Activated T-helper 2 cell treated with anti-CD3 and anti-CD28 coated beads, Interferon-gamma antibody, Interleukin-2, Interleukin-4, amounts not matched to agents 10 μg/mL and 5 μg/mL and 100 μg/mL, durations not matched to agents 14 hours and 24 hours and 36 hours (primary cell): ENCODE measurements at regions of chr1 and their contacts with region 1.

Region 1: DNA sequence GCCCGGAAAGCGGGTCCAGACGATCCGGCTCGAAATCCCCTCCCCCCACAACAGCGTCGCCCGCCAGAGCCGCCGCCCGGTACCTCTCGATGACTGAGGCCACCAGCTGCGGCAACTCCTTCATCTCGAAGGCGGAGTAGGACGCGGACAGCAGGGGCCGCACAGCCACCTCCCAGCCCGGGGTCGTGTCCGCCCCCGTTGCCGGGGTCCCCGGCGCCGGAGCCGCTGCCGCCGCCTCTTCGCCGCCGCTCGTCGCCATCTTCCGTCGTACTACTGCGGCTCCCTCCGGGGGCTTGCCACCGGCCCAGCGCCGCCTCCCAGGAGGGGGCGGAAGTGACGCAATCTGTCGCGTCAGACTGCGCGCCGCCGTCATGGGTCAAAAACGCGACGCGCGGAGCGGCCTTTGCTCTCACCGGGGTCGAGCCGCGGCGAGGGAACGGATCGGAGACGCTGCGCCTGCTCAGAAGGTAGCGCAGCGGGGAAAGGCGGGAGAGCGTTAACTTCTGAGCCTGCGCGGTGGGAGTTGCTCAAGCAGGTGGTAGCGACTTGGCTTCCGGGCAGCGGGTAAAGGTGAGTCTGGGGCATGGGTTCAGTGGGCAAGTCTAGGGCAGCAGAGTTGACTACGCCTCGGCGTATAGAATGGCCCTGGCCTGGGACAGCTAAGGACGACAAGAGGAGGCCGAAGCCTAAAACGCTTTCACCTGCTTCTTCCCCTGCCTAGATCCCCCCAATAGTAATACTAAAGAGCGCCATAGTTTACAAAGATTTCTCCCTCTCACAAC is at the start of gene UBR4:
- DNase-seq: peak; percentile 96
- H3K4me3 Mint-ChIP-seq: peak within 1 kb of the TSS; percentile 98
- H3K27ac Mint-ChIP-seq: peak within 1 kb of the TSS; percentile 94
- H3K4me1 Mint-ChIP-seq: peaks cover 54% of the 10 kb centered on the region
- H3K27me3 Mint-ChIP-seq: no peaks in the 10 kb centered on the region
- total RNA-seq, gene UBR4: 156 and 160 TPM in 2 replicates

Region 2: GRCh38 chr1:18949686-18950400 is 260.3 kb before region 1 on chr1:
- intact Hi-C with region 1: loop called (anchors 5 kb)
- DNase-seq: no peak
- H3K4me3 Mint-ChIP-seq: peak overlapping the region; percentile 73
- H3K27ac Mint-ChIP-seq: peak overlapping the region; percentile 96
- H3K4me1 Mint-ChIP-seq: peaks cover 92% of the 10 kb centered on the region
- H3K27me3 Mint-ChIP-seq: no peaks in the 10 kb centered on the region

Region 3: GRCh38 chr1:19179597-19180264 is 30.4 kb before region 1 on chr1:
- intact Hi-C with region 1: loop called (anchors 5 kb)
- DNase-seq: peak; percentile 31
- H3K4me3 Mint-ChIP-seq: no peak overlapping the region
- H3K27ac Mint-ChIP-seq: peak overlapping the region; percentile 81
- H3K4me1 Mint-ChIP-seq: peaks cover 25% of the 10 kb centered on the region
- H3K27me3 Mint-ChIP-seq: no peaks in the 10 kb centered on the region

Region 4: GRCh38 chr1:19186001-19186400 is 24.2 kb before region 1 on chr1:
- intact Hi-C with region 1: loop called (anchors 1 kb)
- DNase-seq: no peak
- H3K4me3 Mint-ChIP-seq: peak overlapping the region; percentile 60
- H3K27ac Mint-ChIP-seq: peak overlapping the region; percentile 94
- H3K4me1 Mint-ChIP-seq: peaks cover 28% of the 10 kb centered on the region
- H3K27me3 Mint-ChIP-seq: no peaks in the 10 kb centered on the region

Region 5: DNA sequence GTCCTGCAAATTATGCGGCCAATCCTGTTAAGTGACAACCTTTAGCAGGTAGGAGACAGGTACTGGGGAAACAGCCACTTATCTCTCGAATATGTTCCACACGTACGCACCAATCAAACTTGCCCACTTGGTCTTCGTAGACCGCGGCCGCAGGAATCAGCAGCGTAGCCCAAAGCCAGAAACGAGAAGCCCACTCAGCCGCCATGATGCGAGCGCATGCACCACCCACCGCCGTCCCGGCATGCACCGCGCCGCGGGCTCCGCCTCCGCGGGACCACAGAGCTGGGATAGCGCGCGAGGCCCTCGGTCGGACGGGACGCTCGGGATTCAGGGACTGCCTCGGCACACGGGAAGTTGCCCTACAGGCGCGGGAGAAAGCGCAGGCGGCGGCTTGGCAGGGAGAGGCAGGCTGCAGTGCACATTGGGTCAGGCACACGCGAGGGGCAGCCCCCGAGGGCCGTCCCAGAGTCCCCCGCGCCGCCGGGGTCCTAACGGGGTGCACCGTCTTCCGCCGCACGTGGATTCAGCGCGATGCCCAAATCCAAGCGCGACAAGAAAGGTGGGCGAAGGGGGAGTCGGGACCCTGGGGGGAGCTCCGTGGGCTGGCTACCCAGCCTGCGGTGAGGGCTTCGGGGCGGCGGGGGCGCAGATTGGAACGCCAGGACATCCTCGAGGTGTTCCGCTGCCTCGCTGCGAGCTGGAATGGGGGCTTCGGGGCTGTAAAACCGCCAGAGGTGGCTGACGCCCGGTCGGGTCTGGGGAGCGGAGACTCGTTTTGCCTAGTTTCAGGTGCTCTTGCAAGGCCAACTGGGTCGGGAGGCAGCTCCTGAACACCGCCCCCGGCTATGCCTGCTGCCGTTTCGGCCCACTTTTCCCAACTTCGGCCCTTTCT is 41.4 kb after region 1 on chr1 and contains the starts of genes EMC1 and MRTO4:
- intact Hi-C with region 1: loop called (anchors 2 kb)
- DNase-seq: peak; percentile 89
- H3K4me3 Mint-ChIP-seq: peak within 1 kb of the TSS; percentile 93
- H3K27ac Mint-ChIP-seq: peak within 1 kb of the TSS; percentile 97
- H3K4me1 Mint-ChIP-seq: peaks cover 24% of the 10 kb centered on the region
- H3K27me3 Mint-ChIP-seq: no peaks in the 10 kb centered on the region
- total RNA-seq, gene EMC1: 54.0 and 57.4 TPM in 2 replicates
- total RNA-seq, gene MRTO4: 109 and 113 TPM in 2 replicates